ENCODE measurements at regions of chr6 and their contacts with region 1.

Region 1: GRCh38 chr6:166627033-166627874 is at the start of gene RPS6KA2:
- DNase-seq: peak; percentile 99 to 100
- H3K4me3 ChIP-seq: peak within 1 kb of the TSS; percentile 59
- H3K4me3 Mint-ChIP-seq: peak within 1 kb of the TSS; percentile 86
- H3K27ac Mint-ChIP-seq: peak within 1 kb of the TSS; percentile 45
- H3K4me1 ChIP-seq: peaks cover 14% of the 10 kb centered on the region
- H3K4me1 Mint-ChIP-seq: no peaks in the 10 kb centered on the region
- H3K27me3 ChIP-seq: peaks cover 10% of the 10 kb centered on the region
- H3K27me3 Mint-ChIP-seq: peaks cover 13% of the 10 kb centered on the region
- CTCF ChIP-seq: no peak
- total RNA-seq, gene RPS6KA2: 5.5 and 5.6 TPM in 2 replicates

Region 2: GRCh38 chr6:166420351-166420750 is 206.9 kb before region 1 on chr6:
- CTCF ChIA-PET with region 1: no interaction called
- POLR2A ChIA-PET with region 1: no interaction called
- intact Hi-C with region 1: loop called (anchors 2 kb)
- DNase-seq: peak; percentile 58 to 69
- H3K4me3 ChIP-seq: no peak overlapping the region
- H3K4me3 Mint-ChIP-seq: no peak overlapping the region
- H3K27ac Mint-ChIP-seq: no peak overlapping the region
- H3K4me1 ChIP-seq: peaks cover 6% of the 10 kb centered on the region; the same call in 1 of the 2 replicates
- H3K4me1 Mint-ChIP-seq: peaks cover 7% of the 10 kb centered on the region
- H3K27me3 ChIP-seq: peaks cover 1% of the 10 kb centered on the region; the same call in 1 of the 2 replicates
- H3K27me3 Mint-ChIP-seq: peaks cover 9% of the 10 kb centered on the region
- CTCF ChIP-seq: peak; percentile 29 to 38

Region 3: GRCh38 chr6:166523782-166524559 is 103.3 kb before region 1 on chr6:
- CTCF ChIA-PET with region 1: no interaction called
- POLR2A ChIA-PET with region 1: interaction called, 11 read pairs
- intact Hi-C with region 1: no loop called
- DNase-seq: no peak
- H3K4me3 ChIP-seq: no peak overlapping the region
- H3K4me3 Mint-ChIP-seq: no peak overlapping the region
- H3K27ac Mint-ChIP-seq: no peak overlapping the region
- H3K4me1 ChIP-seq: no peaks in the 10 kb centered on the region
- H3K4me1 Mint-ChIP-seq: no peaks in the 10 kb centered on the region
- H3K27me3 ChIP-seq: no peaks in the 10 kb centered on the region
- H3K27me3 Mint-ChIP-seq: peaks cover 4% of the 10 kb centered on the region
- CTCF ChIP-seq: no peak

Region 4: GRCh38 chr6:166586424-166587156 is 40.7 kb before region 1 on chr6 and contains the start of gene RAMACL:
- CTCF ChIA-PET with region 1: no interaction called
- POLR2A ChIA-PET with region 1: no interaction called
- intact Hi-C with region 1: loop called (anchors 5 kb)
- DNase-seq: peak; percentile 60 to 76
- H3K4me3 ChIP-seq: no peak within 1 kb of the TSS
- H3K4me3 Mint-ChIP-seq: no peak within 1 kb of the TSS
- H3K27ac Mint-ChIP-seq: no peak within 1 kb of the TSS
- H3K4me1 ChIP-seq: no peaks in the 10 kb centered on the region
- H3K4me1 Mint-ChIP-seq: no peaks in the 10 kb centered on the region
- H3K27me3 ChIP-seq: no peaks in the 10 kb centered on the region
- H3K27me3 Mint-ChIP-seq: peaks cover 4% of the 10 kb centered on the region
- CTCF ChIP-seq: no peak
- total RNA-seq, gene RAMACL: 0.20 and 0.39 TPM in 2 replicates

Region 5: DNA sequence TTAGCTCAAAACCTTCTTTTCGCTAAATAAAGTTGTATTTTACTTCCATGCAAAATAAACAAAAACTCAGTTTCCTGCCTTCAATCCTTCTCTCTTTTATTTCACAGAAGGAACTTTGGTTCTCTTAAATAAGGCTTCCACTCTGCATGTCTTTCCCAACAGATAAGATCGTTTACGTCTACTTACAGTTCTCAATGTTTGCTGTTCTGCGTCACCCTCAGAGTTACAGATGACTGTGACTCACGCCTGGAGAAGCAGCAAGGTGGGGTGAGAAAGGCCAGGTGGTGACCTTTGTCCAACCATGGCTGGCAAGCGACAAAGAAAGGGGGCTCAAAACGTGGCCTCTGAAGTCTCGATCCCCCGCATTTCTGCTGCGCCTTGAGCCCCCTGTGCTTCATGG is 51.2 kb after region 1 on chr6:
- CTCF ChIA-PET with region 1: interaction called, 6 read pairs
- POLR2A ChIA-PET with region 1: no interaction called
- intact Hi-C with region 1: loop called (anchors 1 kb)
- DNase-seq: peak; percentile 77 to 84
- H3K4me3 ChIP-seq: no peak overlapping the region
- H3K4me3 Mint-ChIP-seq: peak overlapping the region; percentile 66
- H3K27ac Mint-ChIP-seq: peak overlapping the region; percentile 98
- H3K4me1 ChIP-seq: peaks cover 21% of the 10 kb centered on the region
- H3K4me1 Mint-ChIP-seq: peaks cover 28% of the 10 kb centered on the region
- H3K27me3 ChIP-seq: no peaks in the 10 kb centered on the region
- H3K27me3 Mint-ChIP-seq: no peaks in the 10 kb centered on the region
- CTCF ChIP-seq: no peak

Region 6: GRCh38 chr6:166743406-166744222 is 116.4 kb after region 1 on chr6:
- CTCF ChIA-PET with region 1: no interaction called
- POLR2A ChIA-PET with region 1: no interaction called
- intact Hi-C with region 1: loop called (anchors 5 kb)
- DNase-seq: no peak
- H3K4me3 ChIP-seq: no peak overlapping the region
- H3K4me3 Mint-ChIP-seq: no peak overlapping the region
- H3K27ac Mint-ChIP-seq: no peak overlapping the region
- H3K4me1 ChIP-seq: no peaks in the 10 kb centered on the region
- H3K4me1 Mint-ChIP-seq: no peaks in the 10 kb centered on the region
- H3K27me3 ChIP-seq: no peaks in the 10 kb centered on the region
- H3K27me3 Mint-ChIP-seq: no peaks in the 10 kb centered on the region
- CTCF ChIP-seq: no peak

Region 7: GRCh38 chr6:166999145-166999883 is 372.1 kb after region 1 on chr6 and contains the start of gene CEP43:
- CTCF ChIA-PET with region 1: no interaction called
- POLR2A ChIA-PET with region 1: no interaction called
- intact Hi-C with region 1: loop called (anchors 5 kb)
- DNase-seq: peak; percentile 92 to 95
- H3K4me3 ChIP-seq: peak within 1 kb of the TSS; percentile 67
- H3K4me3 Mint-ChIP-seq: peak within 1 kb of the TSS; percentile 84
- H3K27ac Mint-ChIP-seq: peak within 1 kb of the TSS; percentile 82
- H3K4me1 ChIP-seq: peaks cover 3% of the 10 kb centered on the region; the same call in 1 of the 2 replicates
- H3K4me1 Mint-ChIP-seq: peaks cover 14% of the 10 kb centered on the region
- H3K27me3 ChIP-seq: no peaks in the 10 kb centered on the region
- H3K27me3 Mint-ChIP-seq: no peaks in the 10 kb centered on the region
- CTCF ChIP-seq: no peak
- total RNA-seq, gene CEP43: 36.3 and 37.0 TPM in 2 replicates